ENCODE measurements at regions of chr14 and their contacts with region 1.

Region 1: DNA sequence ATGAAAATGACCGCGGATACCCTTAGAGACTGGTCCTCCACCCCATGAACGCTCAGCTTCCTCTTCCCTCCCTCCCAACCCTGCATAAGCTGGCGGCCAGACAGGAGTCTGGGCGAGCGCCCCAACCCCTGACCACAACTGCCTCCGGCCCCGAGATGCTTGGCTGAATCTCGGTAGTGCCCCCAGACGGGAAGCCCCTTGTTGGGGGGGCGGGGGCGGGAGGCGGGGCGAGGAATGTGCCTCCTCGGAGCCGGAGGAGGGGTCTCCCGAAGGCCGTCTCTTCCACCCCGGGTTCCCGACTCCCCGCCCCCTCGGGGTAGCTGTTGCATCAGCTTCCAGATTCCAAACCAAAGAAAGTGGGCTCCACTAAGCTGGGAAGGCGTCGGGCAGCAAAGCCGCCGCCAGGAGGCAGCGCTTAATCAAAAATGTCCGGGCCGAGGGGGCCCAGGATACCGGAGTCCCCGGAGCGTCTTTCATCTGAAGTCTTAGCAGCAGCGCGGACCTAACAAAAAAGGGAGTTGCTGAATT is 7.1 kb upstream of the MRPL52 start:
- DNase-seq: peak; percentile 92
- H3K4me3 ChIP-seq: peak overlapping the region; percentile 39
- H3K4me3 Mint-ChIP-seq: peak overlapping the region; percentile 79
- H3K27ac Mint-ChIP-seq: peak overlapping the region; percentile 94
- H3K4me1 ChIP-seq: peaks cover 61% of the 10 kb centered on the region
- H3K4me1 Mint-ChIP-seq: peaks cover 44% of the 10 kb centered on the region
- H3K27me3 ChIP-seq: no peaks in the 10 kb centered on the region
- H3K27me3 Mint-ChIP-seq: no peaks in the 10 kb centered on the region
- CTCF ChIP-seq: peak; percentile 79 to 81

Region 2: GRCh38 chr14:22766456-22767322 is 55.9 kb before region 1 on chr14 and contains the start of gene OXA1L:
- CTCF ChIA-PET with region 1: interaction called, 9 read pairs
- POLR2A ChIA-PET with region 1: interaction called, 11 read pairs
- intact Hi-C with region 1: no loop called
- DNase-seq: peak; percentile 94 to 97
- H3K4me3 ChIP-seq: peak within 1 kb of the TSS; percentile 77
- H3K4me3 Mint-ChIP-seq: peak within 1 kb of the TSS; percentile 93
- H3K27ac Mint-ChIP-seq: peak within 1 kb of the TSS; percentile 98
- H3K4me1 ChIP-seq: no peaks in the 10 kb centered on the region
- H3K4me1 Mint-ChIP-seq: peaks cover 29% of the 10 kb centered on the region
- H3K27me3 ChIP-seq: no peaks in the 10 kb centered on the region
- H3K27me3 Mint-ChIP-seq: no peaks in the 10 kb centered on the region
- CTCF ChIP-seq: no peak
- total RNA-seq, gene OXA1L: 110 and 116 TPM in 2 replicates

Region 3: GRCh38 chr14:22802860-22803686 is 19.6 kb before region 1 on chr14:
- CTCF ChIA-PET with region 1: interaction called, 28 read pairs
- POLR2A ChIA-PET with region 1: interaction called, 18 read pairs
- intact Hi-C with region 1: loop called (anchors 1 kb)
- DNase-seq: no peak
- H3K4me3 ChIP-seq: no peak overlapping the region
- H3K4me3 Mint-ChIP-seq: no peak overlapping the region
- H3K27ac Mint-ChIP-seq: peak overlapping the region; percentile 62
- H3K4me1 ChIP-seq: peaks cover 67% of the 10 kb centered on the region
- H3K4me1 Mint-ChIP-seq: peaks cover 73% of the 10 kb centered on the region
- H3K27me3 ChIP-seq: no peaks in the 10 kb centered on the region
- H3K27me3 Mint-ChIP-seq: no peaks in the 10 kb centered on the region
- CTCF ChIP-seq: no peak

Region 4: DNA sequence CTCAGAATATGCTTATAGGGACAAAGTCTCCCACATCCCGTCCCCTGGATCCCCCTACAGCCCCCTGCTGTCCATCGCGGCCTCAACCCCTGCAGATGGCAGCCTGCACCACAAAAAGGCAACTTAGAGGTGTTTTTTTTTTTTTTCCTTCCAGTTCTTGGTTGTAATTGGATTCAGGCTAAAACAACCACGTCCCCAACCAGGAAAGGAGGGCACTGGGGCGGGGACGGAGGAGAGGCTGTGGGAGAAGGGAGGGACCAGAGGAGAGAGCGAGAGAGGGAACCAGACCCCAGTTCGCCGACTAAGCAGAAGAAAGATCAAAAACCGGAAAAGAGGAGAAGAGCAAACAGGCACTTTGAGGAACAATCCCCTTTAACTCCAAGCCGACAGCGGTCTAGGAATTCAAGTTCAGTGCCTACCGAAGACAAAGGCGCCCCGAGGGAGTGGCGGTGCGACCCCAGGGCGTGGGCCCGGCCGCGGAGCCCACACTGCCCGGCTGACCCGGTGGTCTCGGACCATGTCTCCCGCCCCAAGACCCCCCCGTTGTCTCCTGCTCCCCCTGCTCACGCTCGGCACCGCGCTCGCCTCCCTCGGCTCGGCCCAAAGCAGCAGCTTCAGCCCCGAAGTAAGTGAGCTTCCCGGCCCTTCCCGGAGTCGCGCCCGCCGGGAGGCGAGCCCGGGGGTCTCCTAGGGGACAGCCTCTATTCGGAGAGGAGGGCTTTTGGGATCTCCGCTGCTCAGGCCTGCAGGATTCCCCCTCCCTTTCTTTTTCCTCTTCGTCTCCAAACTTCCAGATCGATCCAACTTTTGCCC is 13.9 kb after region 1 on chr14 and contains the start of gene MMP14:
- CTCF ChIA-PET with region 1: interaction called, 22 read pairs
- POLR2A ChIA-PET with region 1: interaction called, 13 read pairs
- intact Hi-C with region 1: loop called (anchors 2 kb)
- DNase-seq: peak; percentile 71 to 77
- H3K4me3 ChIP-seq: peak within 1 kb of the TSS; percentile 74
- H3K4me3 Mint-ChIP-seq: peak within 1 kb of the TSS; percentile 85
- H3K27ac Mint-ChIP-seq: peak within 1 kb of the TSS; percentile 87
- H3K4me1 ChIP-seq: peaks cover 16% of the 10 kb centered on the region
- H3K4me1 Mint-ChIP-seq: peaks cover 17% of the 10 kb centered on the region
- H3K27me3 ChIP-seq: no peaks in the 10 kb centered on the region
- H3K27me3 Mint-ChIP-seq: no peaks in the 10 kb centered on the region
- CTCF ChIP-seq: peak; percentile 50 to 75
- total RNA-seq, gene MMP14: 57.2 and 62.9 TPM in 2 replicates

Region 5: DNA sequence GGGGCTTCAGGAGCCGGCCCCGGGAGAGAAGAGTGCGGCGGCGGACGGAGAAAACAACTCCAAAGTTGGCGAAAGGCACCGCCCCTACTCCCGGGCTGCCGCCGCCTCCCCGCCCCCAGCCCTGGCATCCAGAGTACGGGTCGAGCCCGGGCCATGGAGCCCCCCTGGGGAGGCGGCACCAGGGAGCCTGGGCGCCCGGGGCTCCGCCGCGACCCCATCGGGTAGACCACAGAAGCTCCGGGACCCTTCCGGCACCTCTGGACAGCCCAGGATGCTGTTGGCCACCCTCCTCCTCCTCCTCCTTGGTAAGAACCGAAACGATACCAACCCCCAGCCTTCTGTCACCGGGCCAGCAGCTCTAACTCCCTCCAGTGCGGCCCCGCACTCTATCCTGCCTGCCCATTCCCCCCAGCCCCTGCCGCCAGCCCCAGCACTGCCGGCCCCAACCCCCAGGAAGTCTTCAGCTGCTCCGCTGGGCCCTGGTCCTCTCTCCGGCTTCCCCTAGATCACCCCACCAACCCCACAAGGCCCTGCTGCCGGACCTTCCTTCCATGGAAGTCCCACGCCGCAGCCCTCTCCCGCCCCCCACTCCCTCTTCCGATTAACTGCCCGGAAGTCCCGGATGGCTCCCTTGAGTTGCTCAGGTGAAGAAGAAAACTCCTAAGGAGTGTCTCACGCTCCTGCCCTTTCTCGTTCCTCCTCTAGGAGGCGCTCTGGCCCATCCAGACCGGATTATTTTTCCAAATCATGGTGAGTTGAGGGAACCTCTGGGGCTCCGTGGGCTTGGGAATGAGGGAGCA is 49.6 kb after region 1 on chr14:
- CTCF ChIA-PET with region 1: interaction called, 10 read pairs
- POLR2A ChIA-PET with region 1: interaction called, 5 read pairs
- intact Hi-C with region 1: loop called (anchors 1 kb)
- DNase-seq: peak; percentile 82 to 86
- H3K4me3 ChIP-seq: peak overlapping the region; percentile 91
- H3K4me3 Mint-ChIP-seq: peak overlapping the region; percentile 82
- H3K27ac Mint-ChIP-seq: peak overlapping the region; percentile 92
- H3K4me1 ChIP-seq: peaks cover 9% of the 10 kb centered on the region; the same call in 1 of the 2 replicates
- H3K4me1 Mint-ChIP-seq: peaks cover 8% of the 10 kb centered on the region
- H3K27me3 ChIP-seq: no peaks in the 10 kb centered on the region
- H3K27me3 Mint-ChIP-seq: no peaks in the 10 kb centered on the region
- CTCF ChIP-seq: peak; percentile 86 to 89

Region 6: DNA sequence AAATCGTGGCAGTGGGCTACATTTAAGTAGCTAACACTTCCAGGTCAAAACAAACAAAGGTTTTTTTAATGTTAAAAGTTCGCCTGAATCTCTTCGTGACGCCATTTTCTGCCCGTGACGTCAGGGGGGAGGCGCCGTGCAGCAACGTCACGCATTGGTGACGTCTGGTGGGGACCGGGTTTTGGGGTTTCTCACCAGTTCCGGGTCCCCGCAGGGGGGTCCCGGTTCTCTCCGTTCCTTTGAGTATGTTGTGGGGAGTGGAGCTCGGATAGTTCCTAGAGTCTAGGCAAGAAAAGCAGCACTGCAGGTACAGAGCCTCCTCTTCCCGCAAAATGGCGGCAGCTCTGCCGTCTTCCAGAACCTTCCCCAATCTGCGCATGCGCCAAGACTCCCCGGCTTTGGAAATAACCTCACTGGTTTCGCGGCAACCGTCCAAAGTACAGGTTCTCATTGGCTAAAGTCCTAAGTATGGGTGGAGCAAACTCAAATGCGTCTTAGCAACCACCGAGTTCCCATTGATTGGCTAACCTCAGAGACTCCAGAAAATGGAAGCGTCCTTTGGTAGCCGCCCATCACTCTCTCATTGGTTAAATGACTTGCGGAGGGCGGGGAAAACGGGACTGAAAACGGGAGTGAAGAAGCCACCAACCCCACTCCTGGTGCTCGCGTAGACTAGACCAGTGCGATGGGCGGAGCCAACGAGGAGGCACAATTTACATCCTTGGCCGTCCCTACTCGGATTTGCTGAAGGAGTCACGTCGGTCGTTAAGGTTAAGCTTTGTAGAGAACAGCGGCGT is 96.4 kb after region 1 on chr14 and contains the start of gene RBM23:
- CTCF ChIA-PET with region 1: no interaction called
- POLR2A ChIA-PET with region 1: no interaction called
- intact Hi-C with region 1: loop called (anchors 5 kb)
- DNase-seq: peak; percentile 98
- H3K4me3 ChIP-seq: peak within 1 kb of the TSS; percentile 65
- H3K4me3 Mint-ChIP-seq: peak within 1 kb of the TSS; percentile 90
- H3K27ac Mint-ChIP-seq: peak within 1 kb of the TSS; percentile 100
- H3K4me1 ChIP-seq: peaks cover 8% of the 10 kb centered on the region
- H3K4me1 Mint-ChIP-seq: peaks cover 6% of the 10 kb centered on the region
- H3K27me3 ChIP-seq: no peaks in the 10 kb centered on the region
- H3K27me3 Mint-ChIP-seq: peaks cover 2% of the 10 kb centered on the region
- CTCF ChIP-seq: no peak
- total RNA-seq, gene RBM23: 67.0 and 70.0 TPM in 2 replicates

Region 7: DNA sequence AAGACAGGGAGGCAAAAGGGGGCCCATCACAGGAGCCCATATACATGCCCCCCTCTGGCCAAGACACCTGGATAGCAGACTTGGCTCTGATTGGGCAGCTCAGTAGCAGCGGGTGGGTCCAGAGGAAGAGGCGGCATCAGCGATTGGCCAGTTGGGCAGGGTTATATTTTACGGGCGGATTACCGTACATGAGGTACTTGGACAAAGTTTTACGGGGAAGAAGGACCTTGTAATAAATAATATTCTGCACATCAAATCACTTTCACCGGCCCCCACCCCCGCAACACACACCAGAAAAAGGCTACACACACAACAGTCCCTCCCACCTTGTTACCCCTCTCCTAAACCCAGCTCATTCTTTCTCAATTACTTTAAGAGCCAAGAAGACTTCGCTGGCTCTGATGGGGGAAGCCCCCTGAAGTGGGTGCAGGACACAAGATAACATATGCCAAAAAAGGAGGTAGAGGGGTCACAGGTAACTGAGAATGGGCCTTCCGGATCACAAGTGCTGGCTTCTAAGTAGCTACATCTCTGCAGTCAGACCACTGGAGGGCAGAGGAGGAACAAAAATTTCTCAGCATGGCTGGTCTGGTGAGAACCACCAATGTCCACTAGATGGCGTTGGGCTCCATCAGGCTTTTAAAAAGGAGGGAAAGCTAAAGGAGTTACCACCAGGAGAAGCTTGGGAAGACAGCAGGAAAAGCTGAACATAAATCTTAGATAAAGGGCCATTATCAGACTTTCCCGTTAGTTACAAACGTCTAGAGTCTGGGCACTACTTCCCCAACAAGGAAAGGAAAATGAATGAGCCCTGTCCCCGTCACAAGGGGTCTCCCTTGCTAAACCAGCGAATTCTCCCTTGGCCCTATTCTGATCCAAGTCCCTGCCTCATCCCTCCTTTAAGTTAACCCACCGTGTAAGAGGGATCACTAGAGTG is 246.1 kb after region 1 on chr14:
- CTCF ChIA-PET with region 1: no interaction called
- POLR2A ChIA-PET with region 1: no interaction called
- intact Hi-C with region 1: no loop called
- DNase-seq: peak; percentile 89
- H3K4me3 ChIP-seq: no peak overlapping the region
- H3K4me3 Mint-ChIP-seq: peak overlapping the region; percentile 42
- H3K27ac Mint-ChIP-seq: peak overlapping the region; percentile 60
- H3K4me1 ChIP-seq: peaks cover 13% of the 10 kb centered on the region
- H3K4me1 Mint-ChIP-seq: peaks cover 32% of the 10 kb centered on the region
- H3K27me3 ChIP-seq: no peaks in the 10 kb centered on the region
- H3K27me3 Mint-ChIP-seq: no peaks in the 10 kb centered on the region
- CTCF ChIP-seq: peak; percentile 95 to 98

Region 8: DNA sequence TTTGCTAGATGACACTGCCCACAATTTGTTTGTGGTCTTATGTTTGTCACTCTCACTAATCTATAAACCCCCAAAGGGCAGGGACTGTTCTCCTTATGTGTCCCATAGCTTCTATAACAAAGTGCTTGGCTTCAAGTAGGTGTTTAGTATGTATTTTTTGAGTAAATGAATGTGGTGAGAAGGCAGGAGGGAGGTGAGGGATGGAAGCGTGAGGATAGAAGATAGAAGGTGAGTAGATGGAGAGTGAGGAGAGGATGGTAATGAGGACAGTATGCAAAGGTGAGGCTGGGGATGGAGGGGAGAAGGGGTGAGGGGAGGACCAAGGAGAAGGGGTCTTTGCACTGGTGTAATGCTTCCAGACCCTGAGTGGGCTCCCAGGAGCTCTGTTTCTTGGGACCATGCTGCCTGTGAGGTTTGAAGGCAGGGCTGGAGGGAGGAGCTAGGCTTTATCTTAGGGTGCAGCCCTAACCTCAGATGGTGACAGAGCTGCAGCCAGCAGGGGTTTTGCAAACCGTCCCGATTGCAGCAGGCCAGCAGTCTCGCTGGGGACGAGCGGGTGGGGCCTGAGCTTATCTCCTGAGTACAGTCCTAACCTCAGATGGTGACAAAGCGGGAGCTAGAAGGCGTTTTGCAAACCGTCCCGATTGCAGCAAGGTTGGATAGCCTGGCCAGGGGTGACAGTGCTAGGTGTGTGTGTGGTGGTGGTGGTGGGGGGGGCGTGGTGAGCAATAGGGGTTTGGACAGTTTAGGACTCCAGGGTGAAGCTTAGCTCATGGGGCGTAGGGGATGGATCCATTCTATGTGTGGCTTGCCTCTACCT is 289.9 kb after region 1 on chr14:
- CTCF ChIA-PET with region 1: no interaction called
- POLR2A ChIA-PET with region 1: no interaction called
- intact Hi-C with region 1: no loop called
- DNase-seq: peak in 1 of 2 experiments; percentile 25
- H3K4me3 ChIP-seq: no peak overlapping the region
- H3K4me3 Mint-ChIP-seq: no peak overlapping the region
- H3K27ac Mint-ChIP-seq: no peak overlapping the region
- H3K4me1 ChIP-seq: no peaks in the 10 kb centered on the region
- H3K4me1 Mint-ChIP-seq: no peaks in the 10 kb centered on the region
- H3K27me3 ChIP-seq: no peaks in the 10 kb centered on the region
- H3K27me3 Mint-ChIP-seq: no peaks in the 10 kb centered on the region
- CTCF ChIP-seq: no peak